Pancreas (tissue), 10 donors: ENCODE measurements at regions of chr5 and their contacts with region 1.

Region 1: DNA sequence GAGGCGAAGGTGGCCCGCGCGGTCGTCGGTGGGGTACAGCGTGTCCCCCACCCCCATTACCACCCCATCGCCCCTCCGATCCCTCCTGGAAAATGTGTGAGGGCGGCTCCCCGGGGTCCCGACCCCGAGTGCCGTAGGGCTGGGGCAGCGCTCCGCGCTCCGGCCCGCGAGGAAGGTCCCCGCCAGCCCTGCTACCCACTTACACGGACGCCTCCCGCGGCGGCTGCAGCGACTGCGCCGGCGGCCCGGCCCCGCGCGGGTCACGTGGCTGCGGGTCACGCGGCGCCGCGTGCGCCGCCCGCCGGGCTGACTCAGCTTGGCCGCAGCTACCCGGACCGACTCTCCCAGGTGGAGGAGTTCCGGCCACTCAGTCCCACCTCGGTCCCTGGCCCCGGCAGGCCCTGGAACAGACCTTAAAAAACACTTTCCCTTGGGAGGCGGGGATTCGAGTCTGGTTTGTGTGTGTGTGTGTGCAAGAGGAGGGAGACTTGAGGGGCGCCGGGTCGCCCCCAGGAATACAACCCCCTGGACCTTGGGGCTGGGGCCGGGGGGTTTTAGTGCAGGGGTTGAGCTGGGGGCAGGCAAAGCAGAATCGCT is at the start of gene GNPDA1:
- DNase-seq: peak; percentile 79 to 94 (median 87)
- ATAC-seq: peak; percentile 91 to 97 (median 93)
- H3K4me3 ChIP-seq: peak within 1 kb of the TSS; percentile 60 to 84 (median 68)
- H3K27ac ChIP-seq: peak within 1 kb of the TSS; percentile 47 to 85 (median 73)
- H3K4me1 ChIP-seq: peaks cover 0 to 20% (median 0%) of the 10 kb centered on the region in 3 donors
- H3K27me3 ChIP-seq: no peaks in the 10 kb centered on the region
- CTCF ChIP-seq: no peak
- total RNA-seq, gene GNPDA1: 4.1 to 15.2 (median 7.4) TPM

Region 2: DNA sequence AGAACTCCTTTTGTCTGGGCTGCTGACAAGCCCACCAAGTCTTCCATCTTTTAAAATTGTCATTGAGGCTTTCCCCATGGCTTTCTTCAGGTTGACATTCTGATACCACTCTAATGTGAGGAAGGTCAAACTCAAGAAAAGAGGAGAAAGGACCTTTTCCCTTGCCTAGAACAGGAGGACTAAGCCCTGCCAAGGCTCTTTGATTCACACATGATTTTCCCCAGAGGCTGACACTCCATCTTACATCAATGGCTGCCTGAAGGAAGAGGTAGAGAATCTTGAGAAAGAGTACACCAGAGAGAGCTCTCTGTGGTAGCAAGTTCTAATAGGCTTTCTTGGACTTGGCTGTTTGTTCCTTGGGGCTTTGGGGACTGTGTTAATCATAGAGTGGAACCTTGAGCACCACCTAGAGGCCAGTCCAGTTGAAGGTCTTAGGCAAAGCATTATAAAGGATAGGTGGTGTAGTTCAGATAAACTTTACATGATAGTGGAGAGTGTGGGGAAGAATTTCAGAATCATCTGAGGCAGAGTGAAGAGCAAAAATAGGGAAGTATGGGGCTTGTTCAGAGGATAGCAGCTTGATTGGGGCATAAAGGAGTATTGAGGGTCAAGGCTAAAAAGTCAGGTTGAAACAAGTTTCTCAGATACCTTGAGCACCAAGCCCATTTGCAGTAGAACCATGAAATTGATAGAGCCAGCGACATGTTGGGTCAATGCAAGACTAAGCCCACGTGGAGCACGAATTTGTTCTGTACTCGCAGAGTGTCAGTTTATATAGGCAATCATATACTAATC is 132.4 kb after region 1 on chr5:
- intact Hi-C with region 1: loop called in 1 of 3 experiments (anchors 10 kb)
- DNase-seq: peak in 3 of 6 donors; percentile 43 to 62 (median 56)
- ATAC-seq: peak; percentile 60 to 97 (median 93)
- H3K4me3 ChIP-seq: no peak overlapping the region
- H3K27ac ChIP-seq: no peak overlapping the region
- H3K4me1 ChIP-seq: no peaks in the 10 kb centered on the region
- H3K27me3 ChIP-seq: no peaks in the 10 kb centered on the region
- CTCF ChIP-seq: peak; percentile 23 to 59 (median 51)